AG04449 (cell line): ENCODE measurements at regions of chr1 and their contacts with region 1.

Region 1: DNA sequence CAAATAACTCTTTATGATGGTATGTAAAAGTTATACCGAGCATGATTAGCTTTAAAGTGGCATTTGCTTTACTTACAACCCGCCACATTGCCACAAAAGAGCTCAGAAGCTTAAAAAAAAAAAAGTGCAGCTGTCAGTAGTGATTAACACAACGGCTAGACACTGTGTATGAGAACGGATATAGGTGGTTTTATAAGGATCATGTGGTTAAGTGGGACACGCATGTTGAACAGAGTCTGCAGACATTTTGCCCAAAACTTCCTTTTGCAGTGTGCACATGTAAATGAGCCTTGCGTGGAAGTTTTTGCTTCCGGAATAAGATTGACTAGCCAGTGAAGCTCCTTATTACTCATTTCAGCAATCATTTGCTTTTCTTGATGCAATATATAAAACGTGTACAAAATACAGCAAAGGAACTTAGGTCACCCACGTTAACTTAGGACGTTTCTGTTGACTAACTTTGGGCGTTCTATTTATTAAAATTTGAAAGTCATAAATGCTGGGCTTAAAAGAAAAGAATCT is 58.7 kb upstream of the RGS1 start:
- DNase-seq: no peak
- H3K4me3 ChIP-seq: no peak overlapping the region
- CTCF ChIP-seq: no peak

Region 2: GRCh38 chr1:192436441-192437078 is 80.3 kb before region 1 on chr1:
- CTCF ChIA-PET with region 1: no interaction called
- POLR2A ChIA-PET with region 1: no interaction called
- DNase-seq: no peak
- H3K4me3 ChIP-seq: no peak overlapping the region
- CTCF ChIP-seq: no peak

Region 3: GRCh38 chr1:192506741-192507155 is 10.1 kb before region 1 on chr1:
- CTCF ChIA-PET with region 1: interaction called, 12 read pairs
- POLR2A ChIA-PET with region 1: no interaction called
- DNase-seq: no peak
- H3K4me3 ChIP-seq: no peak overlapping the region
- CTCF ChIP-seq: peak; percentile 20

Region 4: GRCh38 chr1:192530254-192530653 is 13.4 kb after region 1 on chr1:
- CTCF ChIA-PET with region 1: no interaction called
- POLR2A ChIA-PET with region 1: no interaction called
- DNase-seq: no peak
- H3K4me3 ChIP-seq: no peak overlapping the region
- CTCF ChIP-seq: no peak